ENCODE measurements at regions of chr13 and their contacts with region 1.

Region 1: DNA sequence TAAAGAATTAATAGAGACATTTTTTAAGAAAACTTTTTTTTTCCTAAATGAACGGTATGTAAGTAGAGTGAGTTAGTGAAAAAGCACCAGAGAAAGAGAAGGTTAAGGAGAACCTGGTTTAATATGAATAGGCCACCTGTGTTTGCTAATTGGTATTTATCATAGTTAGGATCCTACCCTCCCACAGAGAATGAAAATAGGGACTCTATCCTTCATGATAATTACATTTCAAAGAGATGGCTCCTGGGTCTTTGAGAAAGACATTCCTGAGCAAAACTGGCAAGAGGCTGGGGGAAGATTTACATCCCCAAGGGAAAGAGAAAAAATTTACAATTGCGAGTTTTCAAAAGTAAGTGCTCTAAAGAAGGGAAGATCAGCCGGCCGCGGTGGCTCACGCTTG is 1284.5 kb downstream of the SLITRK1 start:
- DNase-seq: no peak
- ATAC-seq: no peak
- H3K4me3 ChIP-seq: no peak overlapping the region
- H3K27ac ChIP-seq: no peak overlapping the region
- H3K4me1 ChIP-seq: no peaks in the 10 kb centered on the region
- H3K27me3 ChIP-seq: no peaks in the 10 kb centered on the region
- CTCF ChIP-seq: no peak

Region 2: GRCh38 chr13:81458170-81458569 is 1139.6 kb before region 1 on chr13:
- CTCF ChIA-PET with region 1: no interaction called
- POLR2A ChIA-PET with region 1: no interaction called
- intact Hi-C with region 1: no loop called
- DNase-seq: no peak
- ATAC-seq: no peak
- H3K4me3 ChIP-seq: no peak overlapping the region
- H3K27ac ChIP-seq: no peak overlapping the region
- H3K4me1 ChIP-seq: no peaks in the 10 kb centered on the region
- H3K27me3 ChIP-seq: no peaks in the 10 kb centered on the region
- CTCF ChIP-seq: no peak

Region 3: DNA sequence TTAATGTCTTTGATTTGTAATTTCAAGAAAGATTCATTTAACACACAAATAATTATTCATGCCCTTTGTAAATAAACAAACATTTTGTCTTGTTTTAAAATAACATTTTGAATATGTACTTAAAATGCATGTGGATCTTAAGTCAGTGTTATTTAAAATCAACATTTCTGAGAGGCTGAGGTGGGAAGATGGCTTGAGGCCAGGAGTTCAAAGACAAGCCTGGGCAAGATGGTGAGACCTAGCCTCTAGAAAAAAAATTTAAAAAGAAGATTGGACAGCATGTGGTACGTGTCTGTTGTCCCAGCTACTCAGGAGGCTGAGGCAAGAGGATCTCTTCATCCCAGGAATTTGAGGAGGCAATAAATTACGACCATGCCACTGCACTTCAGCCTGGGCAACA is 16.3 kb after region 1 on chr13:
- CTCF ChIA-PET with region 1: no interaction called
- POLR2A ChIA-PET with region 1: no interaction called
- intact Hi-C with region 1: loop called (anchors 2 kb)
- DNase-seq: no peak
- ATAC-seq: no peak
- H3K4me3 ChIP-seq: no peak overlapping the region
- H3K27ac ChIP-seq: no peak overlapping the region
- H3K4me1 ChIP-seq: peaks cover 5% of the 10 kb centered on the region; the same call in 1 of the 2 replicates
- H3K27me3 ChIP-seq: no peaks in the 10 kb centered on the region
- CTCF ChIP-seq: no peak

Region 4: DNA sequence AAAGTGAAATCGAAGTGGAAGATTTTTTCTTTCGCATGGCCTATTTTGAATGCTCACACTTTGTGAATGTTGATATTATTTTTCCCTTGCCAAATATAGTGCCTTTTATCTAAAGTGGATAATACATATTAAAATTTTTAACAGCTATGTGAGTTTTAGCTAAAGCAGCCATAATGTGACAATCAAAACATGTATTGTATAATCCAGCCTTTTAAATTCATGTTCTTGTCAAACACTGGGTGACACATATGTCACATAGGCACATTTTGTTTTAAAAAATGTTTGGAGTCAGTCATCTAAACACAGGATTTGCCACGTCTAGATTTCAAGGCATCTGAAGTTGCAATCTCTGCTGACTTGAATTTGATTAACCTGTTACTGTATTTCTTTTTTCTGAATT is 28.0 kb after region 1 on chr13:
- CTCF ChIA-PET with region 1: no interaction called
- POLR2A ChIA-PET with region 1: no interaction called
- intact Hi-C with region 1: no loop called
- DNase-seq: no peak
- ATAC-seq: no peak
- H3K4me3 ChIP-seq: no peak overlapping the region
- H3K27ac ChIP-seq: no peak overlapping the region
- H3K4me1 ChIP-seq: peaks cover 15% of the 10 kb centered on the region
- H3K27me3 ChIP-seq: no peaks in the 10 kb centered on the region
- CTCF ChIP-seq: no peak

Region 5: GRCh38 chr13:82698941-82699340 is 101.2 kb after region 1 on chr13:
- CTCF ChIA-PET with region 1: no interaction called
- POLR2A ChIA-PET with region 1: no interaction called
- intact Hi-C with region 1: no loop called
- DNase-seq: peak; percentile 6
- ATAC-seq: no peak
- H3K4me3 ChIP-seq: no peak overlapping the region
- H3K27ac ChIP-seq: no peak overlapping the region
- H3K4me1 ChIP-seq: no peaks in the 10 kb centered on the region
- H3K27me3 ChIP-seq: no peaks in the 10 kb centered on the region
- CTCF ChIP-seq: no peak

Region 6: DNA sequence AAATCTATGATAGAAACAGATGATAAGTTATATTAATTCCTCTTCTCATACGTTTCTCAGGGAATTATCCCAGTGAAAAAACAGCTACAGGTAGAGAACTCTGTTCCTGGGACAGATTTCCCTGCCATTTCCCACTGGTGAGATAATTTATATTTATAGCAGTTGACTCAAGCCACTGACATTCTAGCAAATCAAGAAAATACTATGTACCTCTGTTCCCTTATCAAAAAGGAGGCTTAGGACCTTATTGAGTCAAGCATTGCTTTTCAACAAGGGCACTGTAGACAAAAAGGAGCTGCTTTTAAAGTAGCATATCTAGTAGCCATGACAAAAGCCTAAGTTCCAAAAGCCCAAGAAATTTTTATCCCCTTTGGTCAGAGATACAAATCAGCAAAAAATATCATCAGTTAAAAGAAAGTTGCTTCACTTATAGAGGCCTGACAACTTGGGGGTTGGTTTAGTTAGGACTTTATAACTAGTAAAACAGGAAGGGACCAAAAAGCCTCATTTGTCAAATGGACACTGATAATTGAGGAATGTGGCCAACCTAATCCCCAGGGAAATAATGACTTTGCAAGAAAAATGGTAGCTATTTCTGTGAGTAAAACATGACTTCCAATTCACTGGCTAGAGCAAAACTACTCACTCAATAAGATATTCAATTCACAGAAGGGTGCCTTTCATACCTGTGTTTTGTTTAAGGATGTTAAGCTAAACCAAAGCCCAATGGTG is 632.0 kb after region 1 on chr13:
- CTCF ChIA-PET with region 1: no interaction called
- POLR2A ChIA-PET with region 1: no interaction called
- intact Hi-C with region 1: no loop called
- DNase-seq: no peak
- ATAC-seq: no peak
- H3K4me3 ChIP-seq: no peak overlapping the region
- H3K27ac ChIP-seq: no peak overlapping the region
- H3K4me1 ChIP-seq: no peaks in the 10 kb centered on the region
- H3K27me3 ChIP-seq: no peaks in the 10 kb centered on the region
- CTCF ChIP-seq: no peak